PC-9 (cell line): ENCODE measurements at regions of chr3 and their contacts with region 1.

Region 1: GRCh38 chr3:160565442-160566403 is at the start of gene KPNA4:
- DNase-seq: peak; percentile 94 to 99
- H3K4me3 ChIP-seq: peak within 1 kb of the TSS; percentile 86
- H3K27ac ChIP-seq: peak within 1 kb of the TSS; percentile 98
- H3K4me1 ChIP-seq: peaks cover 40% of the 10 kb centered on the region
- H3K27me3 ChIP-seq: no peaks in the 10 kb centered on the region
- CTCF ChIP-seq: no peak
- total RNA-seq, gene KPNA4: 49.2 and 61.0 TPM in 2 replicates

Region 2: GRCh38 chr3:160399125-160400029 is 166.3 kb before region 1 on chr3 and contains the starts of genes IFT80 and SMC4:
- CTCF ChIA-PET with region 1: no interaction called
- POLR2A ChIA-PET with region 1: interaction called, 14 read pairs
- intact Hi-C with region 1: no loop called
- DNase-seq: peak; percentile 91 to 98
- H3K4me3 ChIP-seq: peak within 1 kb of the TSS; percentile 90
- H3K27ac ChIP-seq: peak within 1 kb of the TSS; percentile 67
- H3K4me1 ChIP-seq: peaks cover 32% of the 10 kb centered on the region
- H3K27me3 ChIP-seq: no peaks in the 10 kb centered on the region
- CTCF ChIP-seq: no peak
- total RNA-seq, gene IFT80: 47.9 and 59.4 TPM in 2 replicates
- total RNA-seq, gene SMC4: 138 and 181 TPM in 2 replicates

Region 3: DNA sequence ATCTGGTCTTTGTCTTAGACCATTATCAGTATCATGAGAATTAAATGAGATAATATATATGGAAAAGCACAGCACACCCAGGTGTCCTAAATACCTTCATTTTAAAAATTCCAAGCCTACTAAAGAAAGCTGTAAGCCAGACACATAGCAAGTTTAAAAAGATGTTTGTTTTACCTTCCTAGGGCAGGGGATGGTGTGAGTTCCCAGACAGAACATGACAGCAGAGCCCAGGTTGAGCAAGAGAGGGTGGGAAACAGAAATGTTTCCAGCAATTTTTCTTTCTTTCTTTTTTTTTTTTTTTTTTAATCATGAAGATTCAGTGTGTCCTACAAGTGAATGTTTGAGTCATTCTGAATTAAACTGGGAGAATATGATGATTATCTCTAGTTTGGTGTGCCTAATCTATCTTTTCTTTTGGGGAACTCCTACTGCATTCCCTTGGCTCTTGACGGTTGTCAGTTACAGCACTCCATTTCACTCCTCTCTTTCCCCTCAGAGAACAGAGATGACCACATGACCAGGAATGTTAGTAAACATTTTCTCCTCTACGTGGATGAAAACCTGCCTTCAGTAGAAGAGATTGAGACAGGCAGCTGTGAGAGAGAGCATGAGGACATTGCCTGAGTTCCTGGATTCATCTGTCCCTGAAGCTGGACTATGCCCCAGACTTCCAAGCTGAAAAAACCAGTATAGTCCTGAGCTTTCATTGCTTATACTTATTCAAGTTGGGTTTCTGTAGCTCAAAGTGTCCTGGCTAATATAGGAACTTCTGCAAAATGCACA is 56.7 kb after region 1 on chr3:
- CTCF ChIA-PET with region 1: no interaction called
- POLR2A ChIA-PET with region 1: no interaction called
- intact Hi-C with region 1: no loop called
- DNase-seq: no peak
- H3K4me3 ChIP-seq: no peak overlapping the region
- H3K27ac ChIP-seq: no peak overlapping the region
- H3K4me1 ChIP-seq: peaks cover 17% of the 10 kb centered on the region
- H3K27me3 ChIP-seq: no peaks in the 10 kb centered on the region
- CTCF ChIP-seq: no peak

Region 4: GRCh38 chr3:162170581-162170980 is 1604.9 kb after region 1 on chr3:
- CTCF ChIA-PET with region 1: no interaction called
- POLR2A ChIA-PET with region 1: interaction called, 13 read pairs
- intact Hi-C with region 1: no loop called
- DNase-seq: no peak
- H3K4me3 ChIP-seq: no peak overlapping the region
- H3K27ac ChIP-seq: no peak overlapping the region
- H3K4me1 ChIP-seq: no peaks in the 10 kb centered on the region
- H3K27me3 ChIP-seq: no peaks in the 10 kb centered on the region
- CTCF ChIP-seq: no peak